ENCODE measurements at regions of chr2 and their contacts with region 1.

Region 1: DNA sequence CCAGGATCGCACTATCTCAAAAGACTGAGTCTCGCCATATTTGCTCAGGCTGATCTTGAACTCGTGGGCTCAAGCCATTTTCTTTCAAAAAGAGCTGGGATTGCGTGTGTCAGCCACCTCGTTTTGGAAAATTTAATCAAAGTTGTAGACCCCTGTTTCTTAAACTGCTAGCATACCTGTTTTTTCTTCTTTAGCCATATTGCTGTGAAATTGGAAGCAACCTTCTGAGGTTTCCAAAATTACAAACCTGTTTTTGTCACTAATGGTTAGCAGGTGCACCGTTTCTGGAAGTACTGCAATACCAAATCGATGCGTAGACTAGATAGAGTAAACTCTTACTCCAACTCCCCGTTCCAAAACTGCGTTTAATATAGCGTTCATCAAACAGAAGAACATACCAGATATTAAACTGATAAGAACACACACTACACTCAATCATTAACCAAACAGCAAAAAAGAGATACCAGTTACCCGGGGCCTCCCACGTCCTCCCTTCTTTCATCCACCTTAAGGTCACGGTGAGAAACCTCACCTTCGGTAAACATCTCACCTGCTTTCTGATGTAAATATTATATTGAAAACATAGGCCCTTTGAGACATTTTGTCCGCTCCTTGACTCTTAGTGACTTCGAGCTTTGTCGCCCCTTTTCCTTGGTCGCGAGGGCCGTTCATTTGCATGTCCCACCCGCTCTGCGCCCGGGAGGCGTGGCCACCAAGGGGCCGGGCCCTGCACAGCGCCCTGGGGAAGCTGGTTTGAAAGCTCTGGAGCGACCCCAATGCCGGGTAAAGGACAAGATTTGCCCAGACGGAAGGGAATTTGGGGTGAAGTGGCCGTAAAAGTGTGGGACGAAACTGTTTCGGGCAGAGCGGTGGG is at the start of gene RNU2-63P:
- DNase-seq: peak; percentile 92
- ATAC-seq: peak; percentile 88
- H3K4me3 ChIP-seq: peak within 1 kb of the TSS; percentile 72
- H3K27ac ChIP-seq: peak within 1 kb of the TSS; percentile 87
- H3K4me1 ChIP-seq: no peaks in the 10 kb centered on the region
- H3K27me3 ChIP-seq: no peaks in the 10 kb centered on the region
- CTCF ChIP-seq: no peak
- total RNA-seq, gene RNU2-63P: 122 TPM in 1 of 2 replicates, not detected in the other

Region 2: DNA sequence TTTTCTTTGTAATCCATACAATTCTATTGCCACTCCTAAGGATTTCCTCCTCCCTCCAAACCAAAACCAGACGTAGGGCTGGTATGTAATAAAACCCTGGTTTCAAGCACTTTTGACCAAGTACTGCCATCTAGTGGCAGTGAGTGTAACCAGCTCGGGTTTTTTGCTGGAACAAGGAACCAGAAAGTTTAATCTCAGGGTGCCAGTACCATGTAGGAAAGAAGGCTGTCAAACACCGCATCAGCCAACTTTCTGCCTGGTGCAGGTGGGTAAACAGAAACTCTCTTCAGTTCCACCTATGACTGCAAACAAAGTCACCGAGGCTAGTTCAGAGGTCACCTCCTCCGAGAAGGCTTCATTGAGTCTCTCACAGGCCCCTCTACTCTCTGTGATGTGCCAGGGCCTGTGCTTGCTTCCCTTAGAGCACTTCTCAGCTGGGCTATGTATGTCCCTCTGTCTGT is 143.7 kb after region 1 on chr2:
- CTCF ChIA-PET with region 1: no interaction called
- POLR2A ChIA-PET with region 1: no interaction called
- intact Hi-C with region 1: loop called (anchors 5 kb)
- DNase-seq: peak; percentile 84
- ATAC-seq: peak; percentile 64
- H3K4me3 ChIP-seq: no peak overlapping the region
- H3K27ac ChIP-seq: no peak overlapping the region
- H3K4me1 ChIP-seq: no peaks in the 10 kb centered on the region
- H3K27me3 ChIP-seq: peaks cover 25% of the 10 kb centered on the region
- CTCF ChIP-seq: peak; percentile 91